ENCODE measurements at regions of chr1 and their contacts with region 1.

Region 1: GRCh38 chr1:12552951-12553921 is 64.8 kb downstream of the DHRS3 start:
- DNase-seq: no peak
- ATAC-seq: no peak

Region 2: GRCh38 chr1:12516741-12517140 is 36.5 kb before region 1 on chr1:
- intact Hi-C with region 1: loop called (anchors 1 kb)
- DNase-seq: no peak
- ATAC-seq: no peak

Measured in sciatic nerve (tissue), 2 donors.